AG04449 (cell line): ENCODE measurements at regions of chr6 and their contacts with region 1.

Region 1: GRCh38 chr6:166313255-166314070 is 5.3 kb upstream of the PRR18 start:
- DNase-seq: no peak
- H3K4me3 ChIP-seq: no peak overlapping the region
- CTCF ChIP-seq: peak; percentile 72

Region 2: DNA sequence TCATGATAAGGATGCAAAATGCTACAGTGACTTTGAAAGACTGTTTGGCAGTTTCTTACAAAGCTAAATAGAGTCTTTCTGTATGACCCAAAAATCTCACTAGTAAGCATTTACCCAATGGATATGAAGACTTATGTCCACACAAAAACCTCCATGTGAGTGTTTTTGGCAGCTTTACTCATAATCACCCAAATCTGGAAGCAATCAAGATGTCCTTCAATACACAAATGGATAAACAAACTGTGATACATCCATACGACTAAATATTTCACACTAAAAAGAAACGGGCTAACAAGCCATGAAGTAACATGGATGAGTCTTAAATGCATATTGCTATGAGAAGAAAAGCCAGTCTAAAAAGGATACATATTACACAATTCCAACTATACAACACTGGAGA is 767.7 kb before region 1 on chr6:
- CTCF ChIA-PET with region 1: no interaction called
- POLR2A ChIA-PET with region 1: no interaction called
- DNase-seq: no peak
- H3K4me3 ChIP-seq: no peak overlapping the region
- CTCF ChIP-seq: no peak

Region 3: DNA sequence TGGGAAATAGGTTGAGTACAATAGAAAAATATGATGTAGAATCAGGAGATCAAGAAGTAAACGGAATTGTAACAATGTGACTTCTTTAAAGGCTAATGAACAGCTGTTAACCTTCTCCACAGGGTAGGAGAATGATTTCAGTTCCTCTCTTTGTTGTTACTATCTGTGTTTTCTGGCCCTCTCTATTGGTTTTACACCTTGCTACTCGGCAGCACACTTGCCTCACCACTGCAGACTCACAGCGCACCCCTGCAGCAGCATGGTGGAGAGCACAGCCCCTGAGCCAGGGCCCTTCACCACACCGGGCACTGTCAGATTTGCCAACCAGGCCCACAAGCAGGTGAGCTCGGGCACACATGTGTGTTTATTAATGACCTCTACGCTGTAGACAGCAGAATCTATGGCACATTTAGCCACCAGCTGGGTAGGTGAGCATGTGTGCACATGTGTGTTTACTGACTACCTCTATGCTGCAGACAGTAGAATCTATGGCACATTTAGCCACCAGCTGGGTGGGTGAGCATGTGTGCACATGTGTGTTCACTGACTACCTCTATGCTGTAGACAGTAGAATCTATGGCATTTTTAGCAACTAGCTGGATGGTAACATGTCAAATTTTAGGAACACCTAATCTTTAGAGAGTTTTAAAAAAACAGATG is 12.1 kb after region 1 on chr6:
- CTCF ChIA-PET with region 1: interaction called, 18 read pairs
- POLR2A ChIA-PET with region 1: no interaction called
- DNase-seq: no peak
- H3K4me3 ChIP-seq: no peak overlapping the region
- CTCF ChIP-seq: no peak

Region 4: DNA sequence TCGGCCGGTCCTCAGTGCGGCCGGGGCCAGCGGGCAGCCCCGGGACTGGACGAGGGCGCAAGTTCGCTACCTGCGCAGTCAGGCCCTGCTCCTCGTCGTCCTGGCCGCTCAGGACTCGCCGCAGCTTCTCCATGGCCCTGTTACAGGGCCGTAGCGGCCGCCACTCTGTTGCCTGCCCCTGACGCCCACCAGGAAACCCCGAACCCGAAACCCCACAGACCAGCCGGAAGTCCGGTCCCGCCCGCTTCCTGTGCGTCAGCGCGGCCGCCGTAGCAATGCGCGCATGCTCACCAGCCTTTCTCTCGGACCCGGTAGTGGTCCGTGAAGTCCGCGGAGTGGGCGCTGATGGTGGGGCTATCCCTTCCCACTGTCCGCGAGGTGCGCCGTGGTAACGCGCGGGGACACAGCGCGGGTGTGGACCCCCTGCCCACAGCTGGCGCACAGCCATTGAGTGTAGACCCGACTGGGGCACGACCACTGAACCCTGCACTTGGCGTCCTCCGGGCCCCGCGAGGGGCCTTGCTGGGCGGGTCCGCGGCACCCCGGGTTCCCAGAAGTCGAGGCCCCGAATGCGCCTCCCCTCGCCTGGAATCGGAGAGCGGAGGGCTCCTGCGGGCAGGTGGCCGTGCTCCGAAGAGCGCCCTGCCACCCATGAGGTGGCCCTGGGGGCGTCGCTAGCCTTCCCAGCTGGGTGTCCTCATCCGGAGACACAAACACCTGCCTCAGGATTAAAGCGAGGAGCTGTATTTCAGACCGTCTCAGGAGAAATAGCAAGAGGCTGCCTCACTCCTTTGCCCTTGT is 29.1 kb after region 1 on chr6 and contains the start of gene SFT2D1:
- CTCF ChIA-PET with region 1: interaction called, 11 read pairs
- POLR2A ChIA-PET with region 1: no interaction called
- DNase-seq: peak; percentile 12
- H3K4me3 ChIP-seq: peak within 1 kb of the TSS; percentile 100
- CTCF ChIP-seq: no peak

Region 5: GRCh38 chr6:166381733-166382499 is 68.5 kb after region 1 on chr6:
- CTCF ChIA-PET with region 1: interaction called, 18 read pairs
- POLR2A ChIA-PET with region 1: no interaction called
- DNase-seq: no peak
- H3K4me3 ChIP-seq: peak overlapping the region; percentile 83
- CTCF ChIP-seq: peak; percentile 83